ENCODE measurements at regions of chr4 and their contacts with region 1.

Region 1: GRCh38 chr4:99661907-99662306 is 4.3 kb upstream of the C4orf54 start:
- DNase-seq: no peak

Region 2: GRCh38 chr4:99586337-99586736 is 75.6 kb before region 1 on chr4:
- intact Hi-C with region 1: loop called in 1 of 2 experiments (anchors 2 kb)
- DNase-seq: no peak

Measured in posterior vena cava (tissue), 2 donors.